Right cardiac atrium (tissue), 5 donors: ENCODE measurements at regions of chr6 and their contacts with region 1.

Region 1: GRCh38 chr6:157169656-157170055 is 153.7 kb downstream of the TMEM242 start:
- DNase-seq: no peak
- ATAC-seq: peak; percentile 80 to 87
- H3K4me3 ChIP-seq: no peak overlapping the region
- H3K27ac ChIP-seq: peak overlapping the region; percentile 54
- H3K4me1 ChIP-seq: no peaks in the 10 kb centered on the region
- H3K27me3 ChIP-seq: no peaks in the 10 kb centered on the region

Region 2: GRCh38 chr6:157045831-157046454 is 123.7 kb before region 1 on chr6:
- intact Hi-C with region 1: loop called in 1 of 4 experiments (anchors 10 kb)
- DNase-seq: no peak
- ATAC-seq: no peak
- H3K4me3 ChIP-seq: no peak overlapping the region
- H3K27ac ChIP-seq: no peak overlapping the region
- H3K4me1 ChIP-seq: peaks cover 6% of the 10 kb centered on the region
- H3K27me3 ChIP-seq: no peaks in the 10 kb centered on the region